Psoas muscle (tissue), 8 donors: ENCODE measurements at regions of chr12 and their contacts with region 1.

Region 1: DNA sequence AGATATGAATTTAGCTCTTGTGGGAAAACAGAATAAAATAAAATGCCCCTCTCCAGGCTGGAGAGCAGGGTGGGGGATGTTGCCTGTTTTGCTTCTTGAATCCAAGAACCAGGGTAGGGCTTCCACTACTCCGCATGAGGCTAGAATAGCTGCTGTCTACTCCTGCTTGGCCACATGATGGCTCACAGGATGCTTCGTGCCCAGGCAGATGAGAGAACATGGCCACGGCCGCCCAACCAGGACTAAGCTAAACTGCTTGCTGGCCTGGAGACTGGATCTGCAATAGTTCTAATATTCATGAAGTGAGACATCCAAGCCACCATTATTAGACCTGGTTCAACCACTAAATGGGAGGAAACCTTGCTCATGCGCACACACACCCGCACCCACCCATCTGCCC is 122.2 kb upstream of the METAP2 start:
- DNase-seq: no peak
- ATAC-seq: peak; percentile 44 to 89 (median 71)
- H3K4me3 ChIP-seq: no peak overlapping the region
- H3K27ac ChIP-seq: no peak overlapping the region
- H3K4me1 ChIP-seq: peaks cover 7% of the 10 kb centered on the region
- H3K27me3 ChIP-seq: no peaks in the 10 kb centered on the region
- CTCF ChIP-seq: peak; percentile 17

Region 2: GRCh38 chr12:95385246-95386035 is 33.7 kb after region 1 on chr12:
- intact Hi-C with region 1: no loop called
- DNase-seq: peak; percentile 39 to 67
- ATAC-seq: peak; percentile 97 to 99 (median 98)
- H3K4me3 ChIP-seq: peak overlapping the region; percentile 60
- H3K27ac ChIP-seq: peak overlapping the region; percentile 85
- H3K4me1 ChIP-seq: peaks cover 23% of the 10 kb centered on the region
- H3K27me3 ChIP-seq: no peaks in the 10 kb centered on the region
- CTCF ChIP-seq: peak; percentile 14

Region 3: DNA sequence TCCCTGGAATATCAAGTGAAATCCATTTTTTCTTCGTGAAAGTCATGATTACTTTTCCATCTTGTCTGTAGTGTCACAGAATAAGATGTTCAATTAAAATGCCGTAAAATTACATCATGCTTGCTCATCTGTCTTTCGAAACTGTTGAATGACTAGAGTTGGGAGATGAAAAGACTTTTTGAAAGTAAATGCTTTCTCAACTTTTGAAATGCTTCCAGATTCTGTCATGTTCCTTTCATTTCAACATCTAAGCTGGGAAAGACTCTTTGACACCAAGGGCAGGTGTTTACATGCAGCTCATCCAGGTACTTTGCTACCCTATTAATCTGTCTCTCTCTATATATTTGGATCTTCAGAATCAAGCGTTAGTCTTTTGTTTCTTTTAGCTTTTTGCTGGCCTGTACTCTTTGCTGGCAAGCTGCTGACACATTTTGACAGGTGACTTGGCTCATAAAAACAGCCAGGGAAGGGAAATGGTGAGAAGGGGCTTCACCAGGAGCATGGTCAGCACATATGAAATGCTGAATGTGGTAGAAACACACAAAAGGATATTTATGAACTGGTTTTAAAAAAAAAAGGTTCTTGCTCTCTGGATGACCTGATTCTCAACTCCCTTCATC is 45.2 kb after region 1 on chr12:
- intact Hi-C with region 1: no loop called
- DNase-seq: no peak
- ATAC-seq: peak in 1 of 4 donors; percentile 46
- H3K4me3 ChIP-seq: no peak overlapping the region
- H3K27ac ChIP-seq: no peak overlapping the region
- H3K4me1 ChIP-seq: peaks cover 7% of the 10 kb centered on the region
- H3K27me3 ChIP-seq: no peaks in the 10 kb centered on the region
- CTCF ChIP-seq: no peak

Region 4: DNA sequence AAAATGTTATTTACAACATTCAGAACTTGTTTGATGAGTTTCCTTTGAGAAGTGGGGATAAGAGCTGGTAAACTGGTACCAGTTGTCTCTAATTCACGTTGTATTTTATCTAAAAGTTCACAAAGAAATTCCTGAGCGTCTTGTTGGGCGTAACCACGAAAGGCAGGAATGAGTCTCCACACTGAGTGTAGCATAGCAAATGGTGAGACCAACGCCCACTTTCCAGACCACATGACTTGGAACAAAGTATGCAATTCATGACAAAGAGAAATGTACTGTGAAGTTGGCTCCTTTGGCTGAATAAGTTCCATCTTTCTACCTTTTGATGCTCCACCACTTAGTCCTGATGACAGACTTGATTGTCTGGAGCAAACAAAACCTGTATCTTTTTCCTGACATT is 181.1 kb after region 1 on chr12:
- intact Hi-C with region 1: loop called in 1 of 2 experiments (anchors 10 kb)
- DNase-seq: no peak
- ATAC-seq: no peak
- H3K4me3 ChIP-seq: no peak overlapping the region
- H3K27ac ChIP-seq: no peak overlapping the region
- H3K4me1 ChIP-seq: no peaks in the 10 kb centered on the region
- H3K27me3 ChIP-seq: no peaks in the 10 kb centered on the region
- CTCF ChIP-seq: no peak